Uterus (tissue), 4 donors: ENCODE measurements at regions of chr4 and their contacts with region 1.

Region 1: DNA sequence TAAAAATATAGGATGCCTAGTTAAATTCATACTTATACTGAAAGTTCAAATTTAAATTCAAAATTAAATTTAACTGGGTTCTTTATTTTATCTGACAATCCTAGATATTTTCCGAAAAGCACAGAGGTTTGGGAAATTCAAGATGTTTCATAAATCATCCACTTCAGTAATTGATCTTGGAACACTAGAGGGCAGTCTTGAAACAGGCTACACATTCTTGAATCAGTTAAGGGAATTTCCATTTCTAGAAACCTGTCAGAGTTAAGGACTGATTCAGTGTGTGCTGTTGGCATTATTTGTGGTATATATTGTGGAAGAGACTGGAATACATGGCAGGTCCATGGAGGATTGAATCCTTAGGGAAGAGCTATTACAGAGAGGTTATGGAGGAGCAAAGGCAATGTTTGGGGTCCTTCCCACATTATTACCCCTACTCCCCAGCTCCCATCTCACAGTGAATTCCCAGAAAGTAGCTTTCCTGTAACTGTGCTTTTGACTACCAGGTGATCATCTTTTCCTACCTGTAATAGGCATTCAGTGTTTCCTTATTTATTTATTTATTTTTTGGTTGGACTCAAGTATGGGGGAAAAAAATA is 92.9 kb downstream of the EGF start:
- DNase-seq: no peak
- H3K4me3 ChIP-seq: no peak overlapping the region
- H3K27ac ChIP-seq: no peak overlapping the region
- H3K4me1 ChIP-seq: no peaks in the 10 kb centered on the region
- H3K27me3 ChIP-seq: no peaks in the 10 kb centered on the region
- CTCF ChIP-seq: peak; percentile 45 to 64 (median 54)
- POLR2A ChIP-seq: no peak

Region 2: GRCh38 chr4:110516106-110516922 is 510.8 kb after region 1 on chr4:
- intact Hi-C with region 1: loop called (anchors 10 kb)
- DNase-seq: peak; percentile 52 to 57
- H3K4me3 ChIP-seq: peak overlapping the region in 1 of 2 donors; percentile 29
- H3K27ac ChIP-seq: peak overlapping the region in 1 of 2 donors; percentile 49
- H3K4me1 ChIP-seq: no peaks in the 10 kb centered on the region
- H3K27me3 ChIP-seq: no peaks in the 10 kb centered on the region
- CTCF ChIP-seq: peak; percentile 36 to 61 (median 50)
- POLR2A ChIP-seq: no peak